Right ventricle myocardium inferior (tissue), 1 donor: ENCODE measurements at regions of chr3 and their contacts with region 1.

Region 1: DNA sequence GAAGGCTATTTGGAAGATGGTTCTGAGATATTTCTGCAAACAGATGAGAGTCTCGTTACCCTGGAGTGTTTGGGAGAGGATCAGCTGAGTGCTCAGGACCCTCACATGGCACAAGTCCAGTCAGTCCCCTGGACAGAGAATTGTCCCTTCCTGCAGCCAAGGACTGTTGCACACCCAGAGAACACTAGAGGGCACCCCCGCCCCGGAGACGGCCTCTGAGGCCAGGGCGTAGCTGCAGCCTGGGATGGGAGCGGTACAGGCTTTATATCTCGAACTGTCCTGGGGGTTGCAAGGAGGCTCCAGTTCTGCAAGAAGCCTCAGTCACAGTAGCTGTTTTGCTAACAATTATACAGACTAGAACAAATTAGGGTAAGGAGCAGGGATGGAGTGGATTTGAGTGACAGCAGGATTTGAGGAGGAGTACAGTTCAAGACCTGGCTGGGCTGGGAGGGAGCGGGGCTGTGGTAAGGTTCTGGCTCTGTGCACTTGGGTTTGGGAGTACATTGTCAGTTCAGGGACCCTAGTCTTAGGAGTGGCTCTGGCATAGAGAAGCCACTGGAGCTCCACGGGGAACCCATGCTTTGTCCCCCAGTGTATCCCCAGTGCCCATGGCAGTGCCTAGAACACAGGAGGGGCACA is 67.6 kb upstream of the HACD2 start:
- DNase-seq: peak; percentile 87
- ATAC-seq: peak; percentile 92

Region 2: GRCh38 chr3:123702720-123703119 is 50.3 kb after region 1 on chr3:
- intact Hi-C with region 1: loop called (anchors 1 kb)
- DNase-seq: no peak
- ATAC-seq: no peak

Region 3: GRCh38 chr3:123719862-123720453 is 67.5 kb after region 1 on chr3:
- intact Hi-C with region 1: loop called (anchors 1 kb)
- DNase-seq: peak; percentile 81
- ATAC-seq: peak; percentile 78